Endothelial cell of umbilical vein (primary cell): ENCODE measurements at regions of chr4 and their contacts with region 1.

Region 1: GRCh38 chr4:173420324-173420752 is 21.4 kb upstream of the SCRG1 start:
- DNase-seq: peak; percentile 49
- H3K4me3 ChIP-seq: no peak overlapping the region
- H3K27ac ChIP-seq: no peak overlapping the region
- H3K4me1 ChIP-seq: peaks cover 17% of the 10 kb centered on the region
- H3K27me3 ChIP-seq: no peaks in the 10 kb centered on the region
- CTCF ChIP-seq: peak; percentile 4 to 21
- POLR2A ChIP-seq: no peak

Region 2: DNA sequence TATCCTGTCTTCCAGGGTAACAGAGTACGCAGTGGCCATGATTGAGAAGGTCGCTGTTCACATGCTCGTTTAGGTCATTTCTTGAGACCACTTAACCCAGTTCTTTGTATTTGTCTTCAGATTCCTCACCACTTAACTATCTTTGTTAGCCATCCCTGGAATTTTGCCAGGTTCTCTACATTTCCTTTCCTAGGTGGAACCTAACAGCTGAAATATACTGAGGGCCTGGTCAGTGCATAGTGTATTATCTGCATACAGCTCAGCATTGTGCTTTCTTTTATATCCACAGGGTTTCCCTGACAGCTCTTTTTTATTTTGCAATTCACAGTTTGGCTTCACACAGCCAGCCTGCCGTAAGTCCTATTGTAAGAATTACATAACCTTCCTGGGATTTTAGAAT is 400.6 kb before region 1 on chr4:
- CTCF ChIA-PET with region 1: no interaction called
- POLR2A ChIA-PET with region 1: no interaction called
- dilution Hi-C with region 1: no loop called
- intact Hi-C with region 1: no loop called
- DNase-seq: no peak
- H3K4me3 ChIP-seq: no peak overlapping the region
- H3K27ac ChIP-seq: no peak overlapping the region
- H3K4me1 ChIP-seq: no peaks in the 10 kb centered on the region
- H3K27me3 ChIP-seq: no peaks in the 10 kb centered on the region
- CTCF ChIP-seq: no peak
- POLR2A ChIP-seq: no peak

Region 3: DNA sequence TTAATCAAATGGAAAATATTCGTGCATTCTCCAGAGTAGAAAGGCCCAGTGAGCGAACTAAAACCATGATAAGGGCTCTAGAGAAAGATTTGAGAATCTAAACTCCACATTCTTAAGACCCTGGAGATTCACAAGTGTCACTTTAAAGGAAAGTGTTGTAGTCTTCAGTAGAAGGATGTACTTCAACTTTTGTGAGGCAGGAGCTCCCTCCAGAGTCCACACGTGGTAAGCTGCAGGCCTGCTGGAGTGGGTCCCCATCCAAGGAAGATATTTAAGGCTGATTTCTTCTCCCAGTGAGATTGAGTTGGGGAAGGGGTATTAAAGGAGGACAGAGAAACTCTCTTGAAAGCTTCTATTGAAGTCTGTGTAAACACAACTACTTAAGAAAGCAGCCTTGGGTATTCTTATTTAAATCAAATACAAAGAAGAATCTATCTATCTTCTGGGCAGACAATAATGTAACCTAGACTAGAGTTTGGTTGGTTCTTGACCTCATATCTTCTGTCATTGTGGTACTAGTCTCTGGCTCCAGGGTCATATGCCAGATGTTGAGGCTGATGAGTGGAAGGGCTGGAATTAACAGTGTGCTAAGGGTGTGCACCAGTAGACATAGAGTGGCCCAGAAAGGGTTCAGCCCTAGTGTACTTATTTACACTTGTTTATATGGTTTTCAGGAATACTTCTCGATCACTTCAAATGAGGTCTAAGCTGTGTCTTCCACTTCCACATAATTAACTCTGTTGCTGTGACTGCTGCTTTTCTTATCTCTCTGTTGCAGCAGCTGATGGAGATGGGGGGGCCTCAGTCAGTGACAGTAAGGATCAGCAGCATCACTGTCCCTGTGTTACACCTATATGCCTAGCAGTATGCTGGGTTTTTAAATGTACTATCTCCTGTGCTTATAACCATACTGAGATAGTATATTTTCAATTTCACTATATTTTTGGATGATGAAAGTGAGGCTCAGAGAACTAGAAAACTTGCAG is 162.3 kb before region 1 on chr4:
- CTCF ChIA-PET with region 1: interaction called, 4 read pairs
- POLR2A ChIA-PET with region 1: no interaction called
- dilution Hi-C with region 1: no loop called
- intact Hi-C with region 1: loop called (anchors 2 kb)
- DNase-seq: peak; percentile 74
- H3K4me3 ChIP-seq: no peak overlapping the region
- H3K27ac ChIP-seq: no peak overlapping the region
- H3K4me1 ChIP-seq: peaks cover 2% of the 10 kb centered on the region
- H3K27me3 ChIP-seq: no peaks in the 10 kb centered on the region
- CTCF ChIP-seq: peak; percentile 76 to 93
- POLR2A ChIP-seq: no peak

Region 4: GRCh38 chr4:173334085-173334772 is 86.1 kb before region 1 on chr4 and contains the start of gene HMGB2:
- CTCF ChIA-PET with region 1: interaction called, 70 read pairs
- POLR2A ChIA-PET with region 1: interaction called, 3 read pairs
- dilution Hi-C with region 1: no loop called
- intact Hi-C with region 1: loop called (anchors 1 kb)
- DNase-seq: peak; percentile 100
- H3K4me3 ChIP-seq: peak within 1 kb of the TSS; percentile 81 to 98 (median 91)
- H3K27ac ChIP-seq: peak within 1 kb of the TSS; percentile 88
- H3K4me1 ChIP-seq: peaks cover 24% of the 10 kb centered on the region
- H3K27me3 ChIP-seq: no peaks in the 10 kb centered on the region
- CTCF ChIP-seq: no peak
- POLR2A ChIP-seq: peak; percentile 92
- total RNA-seq, gene HMGB2: 217 and 233 TPM in 2 replicates

Region 5: GRCh38 chr4:173494013-173494970 is 74.0 kb after region 1 on chr4:
- CTCF ChIA-PET with region 1: interaction called, 62 read pairs
- POLR2A ChIA-PET with region 1: no interaction called
- dilution Hi-C with region 1: no loop called
- intact Hi-C with region 1: loop called (anchors 1 kb)
- DNase-seq: peak; percentile 53
- H3K4me3 ChIP-seq: peak overlapping the region; percentile 18 to 51 (median 24)
- H3K27ac ChIP-seq: no peak overlapping the region
- H3K4me1 ChIP-seq: peaks cover 14% of the 10 kb centered on the region
- H3K27me3 ChIP-seq: peaks cover 22 to 30% of the 10 kb centered on the region in 2 experiments
- CTCF ChIP-seq: peak; percentile 58 to 77
- POLR2A ChIP-seq: no peak

Region 6: GRCh38 chr4:174120446-174121295 is 700.3 kb after region 1 on chr4:
- CTCF ChIA-PET with region 1: interaction called, 10 read pairs
- POLR2A ChIA-PET with region 1: no interaction called
- dilution Hi-C with region 1: no loop called
- intact Hi-C with region 1: loop called (anchors 1 kb)
- DNase-seq: peak; percentile 65
- H3K4me3 ChIP-seq: peak overlapping the region in 1 of 3 experiments; percentile 39
- H3K27ac ChIP-seq: no peak overlapping the region
- H3K4me1 ChIP-seq: no peaks in the 10 kb centered on the region
- H3K27me3 ChIP-seq: peaks cover 7 to 26% of the 10 kb centered on the region in 2 experiments
- CTCF ChIP-seq: peak; percentile 45 to 50
- POLR2A ChIP-seq: no peak